ENCODE measurements at regions of chr9 and their contacts with region 1.

Region 1: DNA sequence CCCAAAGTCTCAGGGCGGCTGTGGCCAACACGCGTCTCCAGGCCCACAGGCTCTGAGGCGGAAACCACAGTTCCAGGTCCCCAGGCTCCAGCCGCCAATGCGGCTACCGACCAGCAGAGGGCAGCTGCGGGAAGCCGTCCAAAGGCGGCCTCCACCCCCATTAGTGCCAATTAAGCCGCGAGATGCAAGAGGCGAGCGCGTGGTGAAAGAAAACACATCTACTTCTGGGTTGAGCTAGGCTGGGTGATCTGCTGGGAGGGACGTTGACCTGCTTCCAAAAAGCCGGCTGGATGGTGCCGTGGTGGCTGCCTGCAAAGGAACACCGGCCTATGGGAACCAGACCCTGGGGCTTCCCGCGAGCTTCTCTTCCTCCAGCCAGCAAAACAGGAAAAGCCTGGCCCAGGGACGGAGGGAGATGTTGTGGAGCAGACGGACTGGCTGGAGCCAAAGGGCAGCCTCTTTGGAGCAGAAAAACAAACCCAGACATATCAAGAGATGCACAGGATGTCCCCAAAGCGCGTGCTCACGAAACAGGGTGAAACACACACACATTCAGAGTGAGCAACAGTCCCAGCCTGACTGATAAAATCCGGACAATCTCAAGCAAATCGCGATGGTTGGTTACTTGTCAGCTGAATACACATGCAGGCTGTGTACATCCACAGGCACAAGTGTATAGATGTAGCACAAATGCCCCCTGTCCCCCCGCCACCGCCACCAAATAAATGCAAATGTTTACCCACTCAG is 187.1 kb upstream of the BRINP1 start:
- DNase-seq: peak; percentile 43
- H3K4me3 Mint-ChIP-seq: no peak overlapping the region
- H3K27ac Mint-ChIP-seq: no peak overlapping the region
- H3K4me1 Mint-ChIP-seq: peaks cover 6% of the 10 kb centered on the region
- H3K27me3 Mint-ChIP-seq: peaks cover 9% of the 10 kb centered on the region

Region 2: DNA sequence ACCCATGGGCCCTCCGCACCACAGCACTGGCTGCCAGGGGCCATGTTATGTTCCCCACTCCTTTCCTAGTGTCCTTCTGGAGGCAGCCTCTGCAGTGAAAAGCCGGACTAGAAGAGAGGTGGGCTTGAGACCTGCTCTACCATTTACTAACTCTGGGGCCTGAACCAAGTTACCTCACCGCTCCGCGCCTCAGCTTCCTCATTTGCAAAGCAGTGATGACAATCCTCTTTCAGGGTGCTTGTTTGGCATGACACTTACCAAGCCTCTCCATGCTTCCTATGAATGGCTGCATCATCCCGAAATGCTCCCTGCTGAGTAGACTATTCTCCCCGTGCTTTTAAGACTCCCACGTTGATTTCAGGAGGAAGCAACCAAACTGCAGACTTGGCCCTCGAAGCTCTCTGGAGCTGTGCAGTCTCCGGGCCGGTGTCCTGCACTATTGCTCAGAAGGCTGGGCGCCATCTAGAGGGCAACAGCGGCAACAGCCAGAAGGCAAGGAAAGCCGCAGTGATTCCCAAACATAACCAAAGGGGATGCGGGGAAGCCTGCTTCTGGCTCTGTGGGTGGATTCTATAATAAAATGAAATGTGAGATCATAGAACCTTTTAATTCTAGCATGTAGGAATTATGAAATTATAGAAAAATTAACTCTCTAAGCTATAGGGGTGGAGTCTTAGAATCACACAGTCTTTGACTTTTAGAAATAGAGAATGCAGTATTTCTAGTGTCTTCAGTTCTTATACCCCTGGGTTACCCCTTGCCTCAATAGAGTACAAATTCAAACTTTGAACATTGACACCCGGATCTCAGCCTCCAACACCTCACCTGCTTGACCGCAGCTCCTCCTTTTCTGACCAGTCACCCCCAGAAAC is 412.8 kb after region 1 on chr9:
- intact Hi-C with region 1: loop called (anchors 2 kb)
- DNase-seq: peak; percentile 16
- H3K4me3 Mint-ChIP-seq: no peak overlapping the region
- H3K27ac Mint-ChIP-seq: no peak overlapping the region
- H3K4me1 Mint-ChIP-seq: no peaks in the 10 kb centered on the region
- H3K27me3 Mint-ChIP-seq: no peaks in the 10 kb centered on the region

Region 3: DNA sequence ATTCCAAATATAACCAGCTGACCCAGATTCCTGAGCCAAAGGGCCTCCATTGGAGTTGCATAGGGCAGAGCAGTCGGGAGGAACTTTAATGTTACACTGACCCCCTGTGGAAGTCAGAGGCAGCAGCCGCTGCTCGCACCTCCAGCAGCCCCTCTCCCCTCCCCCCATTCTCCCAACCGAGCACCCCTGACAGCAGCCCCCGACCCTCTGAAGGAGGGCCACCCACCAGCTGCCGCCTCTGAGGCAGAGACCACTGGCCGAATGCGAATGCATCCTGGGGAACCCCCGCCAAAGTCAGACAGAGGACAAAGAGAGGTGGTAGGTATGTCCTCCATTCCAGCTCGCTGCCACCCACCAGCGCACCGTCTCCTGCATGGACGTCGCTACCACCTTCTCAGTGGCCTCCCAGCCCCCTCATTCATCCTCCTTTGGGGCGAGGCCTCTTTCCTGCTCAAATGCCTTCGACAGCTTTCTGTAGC is 792.7 kb after region 1 on chr9:
- intact Hi-C with region 1: loop called (anchors 5 kb)
- DNase-seq: no peak
- H3K4me3 Mint-ChIP-seq: no peak overlapping the region
- H3K27ac Mint-ChIP-seq: no peak overlapping the region
- H3K4me1 Mint-ChIP-seq: peaks cover 3% of the 10 kb centered on the region
- H3K27me3 Mint-ChIP-seq: peaks cover 4% of the 10 kb centered on the region